HEK293 (cell line): ENCODE measurements at regions of chr12 and their contacts with region 1.

Region 1: GRCh38 chr12:111812881-111813741 is 28.9 kb upstream of the MAPKAPK5 start:
- H3K4me3 ChIP-seq: no peak overlapping the region
- H3K27ac ChIP-seq: no peak overlapping the region
- H3K4me1 ChIP-seq: no peaks in the 10 kb centered on the region
- CTCF ChIP-seq: peak; percentile 83

Region 2: DNA sequence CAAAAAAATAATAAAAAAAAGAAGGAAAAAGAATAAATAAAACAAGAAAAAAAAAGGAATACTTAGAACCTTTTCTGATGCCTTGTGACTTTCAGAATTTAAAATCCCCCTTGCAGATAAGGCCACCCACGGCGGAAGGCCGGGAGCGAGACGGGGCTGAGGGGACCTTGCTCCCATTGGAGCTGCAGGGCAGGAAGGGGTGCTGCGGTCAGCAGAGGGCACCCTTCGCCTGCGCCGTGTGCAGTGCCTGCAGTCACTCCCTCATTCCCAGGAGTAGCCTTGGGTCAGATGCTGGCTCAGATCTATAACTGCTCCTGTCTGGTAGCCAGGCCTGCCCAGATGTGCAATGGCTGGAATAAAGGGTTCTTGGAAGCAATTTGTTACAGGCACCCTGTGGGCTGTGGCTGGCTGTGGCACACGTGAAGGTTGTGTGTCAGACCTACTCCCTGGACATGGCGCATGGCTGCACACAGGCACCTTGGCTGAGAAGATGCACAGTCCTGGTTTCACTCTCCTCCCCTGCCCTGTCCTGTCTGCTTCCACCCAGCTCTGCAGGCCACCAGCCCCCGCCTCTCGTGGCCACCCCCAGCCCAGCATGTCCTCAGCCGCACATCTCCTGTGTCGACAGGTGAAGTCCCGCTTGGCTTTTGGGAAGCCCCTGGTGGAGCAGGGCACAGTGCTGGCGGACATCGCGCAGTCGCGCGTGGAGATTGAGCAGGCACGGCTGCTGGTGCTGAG is 59.8 kb before region 1 on chr12:
- CTCF ChIA-PET with region 1: interaction called, 55 read pairs
- POLR2A ChIA-PET with region 1: interaction called, 3 read pairs
- H3K4me3 ChIP-seq: no peak overlapping the region
- H3K27ac ChIP-seq: no peak overlapping the region
- H3K4me1 ChIP-seq: no peaks in the 10 kb centered on the region
- CTCF ChIP-seq: peak; percentile 92

Region 3: DNA sequence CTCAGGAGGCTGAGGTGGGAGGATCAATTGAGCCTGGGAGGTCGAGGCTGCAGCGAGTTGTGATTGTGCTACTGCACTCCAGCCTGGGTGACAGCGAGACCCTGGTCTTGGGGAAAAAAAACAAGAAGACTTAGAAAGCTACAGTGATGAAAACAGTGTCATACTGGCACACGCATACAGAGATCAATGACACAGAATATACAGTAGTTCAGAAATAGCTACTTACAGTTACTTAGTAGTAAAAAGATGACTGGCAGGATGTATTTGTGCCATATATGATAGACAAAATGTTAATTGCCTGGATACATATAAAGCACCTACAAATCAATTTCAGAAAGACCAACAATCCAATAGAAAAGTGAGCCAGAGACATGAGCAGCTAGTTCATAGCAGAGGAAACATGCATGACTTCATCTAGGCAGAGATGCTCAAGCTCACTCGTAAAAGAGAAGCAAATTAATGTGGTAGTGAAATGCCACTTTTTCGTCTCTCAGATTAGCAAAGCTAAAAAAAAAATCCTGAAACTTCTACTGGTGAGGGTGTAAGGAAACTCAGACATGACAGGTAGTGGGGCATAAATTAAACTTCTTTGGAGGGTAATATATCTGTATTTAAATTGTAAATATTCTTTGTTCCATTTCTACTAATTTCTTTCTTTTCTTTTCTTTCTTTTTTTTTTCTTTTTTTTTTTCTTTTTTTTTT is 48.8 kb before region 1 on chr12:
- CTCF ChIA-PET with region 1: interaction called, 10 read pairs
- POLR2A ChIA-PET with region 1: interaction called, 7 read pairs
- H3K4me3 ChIP-seq: no peak overlapping the region
- H3K27ac ChIP-seq: no peak overlapping the region
- H3K4me1 ChIP-seq: no peaks in the 10 kb centered on the region; the same call in 1 of the 2 replicates
- CTCF ChIP-seq: no peak

Region 4: GRCh38 chr12:111785651-111786050 is 27.5 kb before region 1 on chr12:
- CTCF ChIA-PET with region 1: interaction called, 12 read pairs
- POLR2A ChIA-PET with region 1: no interaction called
- H3K4me3 ChIP-seq: no peak overlapping the region
- H3K27ac ChIP-seq: no peak overlapping the region
- H3K4me1 ChIP-seq: no peaks in the 10 kb centered on the region
- CTCF ChIP-seq: no peak

Region 5: GRCh38 chr12:111799758-111800157 is 13.4 kb before region 1 on chr12:
- CTCF ChIA-PET with region 1: interaction called, 14 read pairs
- POLR2A ChIA-PET with region 1: no interaction called
- H3K4me3 ChIP-seq: no peak overlapping the region
- H3K27ac ChIP-seq: no peak overlapping the region
- H3K4me1 ChIP-seq: no peaks in the 10 kb centered on the region
- CTCF ChIP-seq: no peak

Region 6: DNA sequence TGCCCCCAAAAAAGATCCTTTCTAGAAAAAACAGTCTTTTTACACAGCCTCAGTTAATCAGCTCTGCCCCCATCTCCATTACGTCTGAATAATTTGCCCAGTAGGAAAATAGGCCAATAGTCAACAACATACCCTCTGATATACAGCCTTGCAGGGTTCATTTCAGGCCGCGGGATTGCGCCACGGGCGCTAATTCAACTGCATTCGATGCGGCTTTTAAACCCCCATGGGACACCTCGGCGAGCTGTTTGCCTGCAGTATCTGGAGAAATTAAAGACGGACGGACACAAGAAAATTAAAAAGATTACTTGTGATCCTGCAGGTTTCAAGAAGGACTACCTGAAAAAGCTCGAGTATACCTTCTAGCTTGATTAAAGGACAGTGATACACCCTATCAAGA is 236.2 kb after region 1 on chr12:
- CTCF ChIA-PET with region 1: no interaction called
- POLR2A ChIA-PET with region 1: no interaction called
- H3K4me3 ChIP-seq: no peak overlapping the region
- H3K27ac ChIP-seq: no peak overlapping the region
- H3K4me1 ChIP-seq: no peaks in the 10 kb centered on the region
- CTCF ChIP-seq: no peak

Region 7: DNA sequence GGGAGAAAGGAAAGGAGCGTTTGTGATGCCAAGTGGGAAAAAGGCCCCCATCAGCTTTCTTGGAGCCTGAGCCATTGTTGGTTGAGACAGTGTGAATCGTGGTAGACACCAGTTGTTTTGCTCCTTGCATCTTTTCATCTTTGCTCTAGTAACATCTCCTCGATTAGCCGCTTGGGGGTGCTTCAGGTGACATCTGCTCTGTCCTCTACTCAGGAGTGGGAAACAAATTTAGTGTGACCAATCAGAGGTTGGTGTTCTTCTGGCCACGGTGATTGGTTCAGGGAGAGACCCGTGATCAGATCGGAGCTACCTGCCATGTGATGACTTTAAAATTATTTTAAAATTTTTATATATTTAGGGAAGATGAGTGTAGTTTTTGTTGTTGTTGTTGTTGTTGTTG is 912.3 kb after region 1 on chr12:
- CTCF ChIA-PET with region 1: no interaction called
- POLR2A ChIA-PET with region 1: no interaction called
- H3K4me3 ChIP-seq: no peak overlapping the region
- H3K27ac ChIP-seq: no peak overlapping the region
- H3K4me1 ChIP-seq: no peaks in the 10 kb centered on the region
- CTCF ChIP-seq: no peak